Mammary epithelial cell (primary cell): ENCODE measurements at regions of chr2 and their contacts with region 1.

Region 1: GRCh38 chr2:216713691-216714336 is 18.5 kb upstream of the IGFBP5 start:
- DNase-seq: peak; percentile 97
- H3K4me3 ChIP-seq: no peak overlapping the region
- H3K27ac ChIP-seq: peak overlapping the region; percentile 92
- H3K4me1 ChIP-seq: peaks cover 58% of the 10 kb centered on the region
- H3K27me3 ChIP-seq: no peaks in the 10 kb centered on the region
- CTCF ChIP-seq: no peak

Region 2: GRCh38 chr2:216606551-216607276 is 107.1 kb before region 1 on chr2:
- CTCF ChIA-PET with region 1: no interaction called
- dilution Hi-C with region 1: no loop called
- in situ Hi-C with region 1: no loop called
- intact Hi-C with region 1: no loop called
- DNase-seq: no peak
- H3K4me3 ChIP-seq: no peak overlapping the region
- H3K27ac ChIP-seq: no peak overlapping the region
- H3K4me1 ChIP-seq: peaks cover 29% of the 10 kb centered on the region
- H3K27me3 ChIP-seq: no peaks in the 10 kb centered on the region
- CTCF ChIP-seq: no peak

Region 3: GRCh38 chr2:216619411-216620393 is 94.1 kb before region 1 on chr2:
- CTCF ChIA-PET with region 1: no interaction called
- dilution Hi-C with region 1: no loop called
- in situ Hi-C with region 1: no loop called
- intact Hi-C with region 1: no loop called
- DNase-seq: no peak
- H3K4me3 ChIP-seq: no peak overlapping the region
- H3K27ac ChIP-seq: no peak overlapping the region
- H3K4me1 ChIP-seq: no peaks in the 10 kb centered on the region
- H3K27me3 ChIP-seq: no peaks in the 10 kb centered on the region
- CTCF ChIP-seq: no peak

Region 4: GRCh38 chr2:216692636-216693413 is 21.0 kb before region 1 on chr2:
- CTCF ChIA-PET with region 1: interaction called, 14 read pairs
- dilution Hi-C with region 1: no loop called
- in situ Hi-C with region 1: no loop called
- intact Hi-C with region 1: no loop called
- DNase-seq: peak; percentile 50
- H3K4me3 ChIP-seq: peak overlapping the region; percentile 37 to 48 (median 40)
- H3K27ac ChIP-seq: no peak overlapping the region
- H3K4me1 ChIP-seq: peaks cover 35% of the 10 kb centered on the region
- H3K27me3 ChIP-seq: peaks cover 4% of the 10 kb centered on the region
- CTCF ChIP-seq: no peak

Region 5: GRCh38 chr2:216758256-216759155 is 44.7 kb after region 1 on chr2:
- CTCF ChIA-PET with region 1: no interaction called
- dilution Hi-C with region 1: loop called (anchors 5 kb)
- in situ Hi-C with region 1: no loop called
- intact Hi-C with region 1: no loop called
- DNase-seq: no peak
- H3K4me3 ChIP-seq: no peak overlapping the region
- H3K27ac ChIP-seq: no peak overlapping the region
- H3K4me1 ChIP-seq: no peaks in the 10 kb centered on the region
- H3K27me3 ChIP-seq: no peaks in the 10 kb centered on the region
- CTCF ChIP-seq: no peak

Region 6: GRCh38 chr2:216777650-216778273 is 63.9 kb after region 1 on chr2:
- CTCF ChIA-PET with region 1: no interaction called
- dilution Hi-C with region 1: no loop called
- in situ Hi-C with region 1: no loop called
- intact Hi-C with region 1: loop called (anchors 5 kb)
- DNase-seq: peak; percentile 76
- H3K4me3 ChIP-seq: no peak overlapping the region
- H3K27ac ChIP-seq: no peak overlapping the region
- H3K4me1 ChIP-seq: peaks cover 13% of the 10 kb centered on the region
- H3K27me3 ChIP-seq: no peaks in the 10 kb centered on the region
- CTCF ChIP-seq: peak; percentile 96 to 97